ENCODE measurements at regions of chr18 and their contacts with region 1.

Region 1: DNA sequence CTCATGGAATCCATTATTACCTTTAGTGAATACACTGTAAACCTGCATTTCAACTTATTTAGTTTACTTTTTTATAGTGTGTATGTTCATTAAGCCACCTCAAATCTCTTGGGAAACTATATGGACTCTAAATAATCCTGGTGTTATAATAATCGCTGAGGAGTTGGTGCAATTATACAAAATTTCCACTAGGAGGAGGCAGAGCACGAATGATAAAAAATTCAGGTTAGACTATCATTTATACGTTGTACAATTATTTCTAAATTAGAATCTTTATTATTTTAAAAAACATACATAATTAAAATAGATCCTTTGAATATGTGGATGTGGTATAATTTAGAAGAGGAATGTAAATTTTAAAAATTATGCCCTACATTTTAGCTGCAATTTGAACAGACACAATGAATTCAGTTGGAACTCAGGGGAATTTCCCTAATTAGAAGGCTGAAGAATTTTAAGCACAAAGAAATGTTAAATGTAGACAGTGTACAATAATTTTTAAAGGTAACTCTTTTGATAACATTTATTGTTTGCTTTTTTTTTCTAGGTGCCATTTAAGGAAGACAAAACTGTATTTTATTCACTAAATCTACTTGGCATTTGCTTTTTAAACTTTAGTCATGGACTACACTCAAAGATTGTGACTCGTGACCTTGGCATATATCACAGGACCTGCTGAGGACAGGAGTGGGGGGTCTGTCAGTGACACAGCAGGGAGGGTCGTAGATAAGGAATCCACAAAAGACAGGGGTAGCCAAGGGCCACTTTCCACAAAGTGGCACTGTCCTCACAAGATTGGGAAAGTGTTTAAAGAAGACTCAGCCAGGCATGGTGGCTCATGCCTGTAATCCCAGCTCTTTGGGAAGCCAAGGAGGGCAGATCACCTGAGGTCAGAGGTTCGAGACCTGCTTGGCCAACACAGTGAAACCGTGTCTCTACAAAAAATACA is 45.5 kb downstream of the RAB12 start:
- DNase-seq: peak in 1 of 4 donors; percentile 21
- ATAC-seq: peak; percentile 76
- H3K4me3 ChIP-seq: no peak overlapping the region
- H3K27ac ChIP-seq: no peak overlapping the region
- H3K4me1 ChIP-seq: no peaks in the 10 kb centered on the region
- H3K27me3 ChIP-seq: peaks cover 0 to 3% of the 10 kb centered on the region in 2 donors
- CTCF ChIP-seq: peak; percentile 59 to 62

Region 2: GRCh38 chr18:8988261-8988871 is 333.6 kb after region 1 on chr18:
- intact Hi-C with region 1: loop called in 1 of 2 experiments (anchors 5 kb)
- DNase-seq: peak in 3 of 4 donors; percentile 33 to 67 (median 44)
- ATAC-seq: peak; percentile 93
- H3K4me3 ChIP-seq: no peak overlapping the region
- H3K27ac ChIP-seq: no peak overlapping the region
- H3K4me1 ChIP-seq: no peaks in the 10 kb centered on the region
- H3K27me3 ChIP-seq: no peaks in the 10 kb centered on the region
- CTCF ChIP-seq: peak; percentile 67 to 73

Measured in left lung (tissue), 14 donors.